ENCODE measurements at regions of chr3 and their contacts with region 1.

Region 1: GRCh38 chr3:132569153-132569552 is 27.9 kb upstream of the ACKR4 start:
- DNase-seq: no peak
- H3K4me3 Mint-ChIP-seq: peak overlapping the region; percentile 4
- H3K27ac Mint-ChIP-seq: peak overlapping the region; percentile 86
- H3K4me1 Mint-ChIP-seq: peaks cover 19% of the 10 kb centered on the region
- H3K27me3 Mint-ChIP-seq: no peaks in the 10 kb centered on the region

Region 2: GRCh38 chr3:132507657-132508056 is 61.5 kb before region 1 on chr3:
- intact Hi-C with region 1: no loop called
- DNase-seq: no peak
- H3K4me3 Mint-ChIP-seq: no peak overlapping the region
- H3K27ac Mint-ChIP-seq: no peak overlapping the region
- H3K4me1 Mint-ChIP-seq: no peaks in the 10 kb centered on the region
- H3K27me3 Mint-ChIP-seq: no peaks in the 10 kb centered on the region

Region 3: GRCh38 chr3:132543036-132543739 is 26.0 kb before region 1 on chr3:
- intact Hi-C with region 1: loop called (anchors 1 kb)
- DNase-seq: no peak
- H3K4me3 Mint-ChIP-seq: peak overlapping the region; percentile 25
- H3K27ac Mint-ChIP-seq: peak overlapping the region; percentile 88
- H3K4me1 Mint-ChIP-seq: peaks cover 57% of the 10 kb centered on the region
- H3K27me3 Mint-ChIP-seq: no peaks in the 10 kb centered on the region

Region 4: DNA sequence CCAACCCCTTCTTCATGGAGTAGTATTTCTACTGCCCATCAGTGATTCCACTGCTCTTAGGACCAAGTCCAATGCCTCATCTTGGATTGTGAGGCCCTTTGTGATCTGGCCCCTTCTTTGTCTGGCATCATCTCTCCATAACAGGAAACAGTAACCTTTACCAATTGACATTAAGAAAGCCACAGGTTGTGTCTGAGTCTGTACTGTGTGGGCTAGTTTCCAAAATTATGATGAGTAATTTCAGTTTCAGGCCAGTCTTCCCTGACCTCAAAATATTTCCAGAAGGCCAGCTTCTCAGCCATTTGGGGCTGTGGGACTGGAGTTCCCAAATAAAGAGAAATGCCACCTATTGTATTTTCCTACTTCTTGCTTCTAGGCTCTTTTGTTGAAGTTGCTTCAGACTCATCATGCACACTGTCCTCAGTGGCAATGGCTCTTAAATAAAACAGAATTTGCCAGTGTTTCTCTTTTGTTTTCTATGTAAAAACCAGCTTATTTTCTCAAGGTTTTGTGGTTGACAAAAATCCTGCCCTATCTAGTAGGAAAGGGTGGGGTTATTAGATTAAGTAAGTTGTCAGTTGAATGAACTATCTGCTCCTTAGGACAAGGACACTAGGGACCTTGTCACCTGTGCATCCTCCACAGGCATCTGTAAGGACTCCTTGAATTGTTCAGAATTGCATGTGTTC is 19.1 kb before region 1 on chr3:
- intact Hi-C with region 1: loop called (anchors 1 kb)
- DNase-seq: no peak
- H3K4me3 Mint-ChIP-seq: peak overlapping the region; percentile 69
- H3K27ac Mint-ChIP-seq: peak overlapping the region; percentile 95
- H3K4me1 Mint-ChIP-seq: peaks cover 63% of the 10 kb centered on the region
- H3K27me3 Mint-ChIP-seq: no peaks in the 10 kb centered on the region

Measured in activated T-helper 1 cell treated with anti-CD3 and anti-CD28 coated beads, Interleukin-12 subunit alpha, Interleukin-12 subunit beta, Interleukin-2, Interleukin-4 antibody, amounts not matched to agents 30 ng/mL and 10 ng/mL and 1 ng/mL, durations not matched to agents 14 hours and 24 hours and 36 hours (primary cell).